Right ventricle myocardium inferior (tissue), 1 donor: ENCODE measurements at regions of chr17 and their contacts with region 1.

Region 1: GRCh38 chr17:43338886-43339516 is 59.8 kb upstream of the ARL4D start:
- DNase-seq: peak; percentile 81
- ATAC-seq: no peak

Region 2: GRCh38 chr17:43024407-43025289 is 314.4 kb before region 1 on chr17 and contains the start of gene RND2:
- intact Hi-C with region 1: loop called (anchors 10 kb)
- DNase-seq: peak; percentile 90
- ATAC-seq: peak; percentile 73
- total RNA-seq, gene RND2: 1.5 TPM

Region 3: GRCh38 chr17:43104665-43105064 is 234.3 kb before region 1 on chr17:
- intact Hi-C with region 1: no loop called
- DNase-seq: no peak
- ATAC-seq: no peak

Region 4: GRCh38 chr17:43456661-43457361 is 117.8 kb after region 1 on chr17:
- intact Hi-C with region 1: no loop called
- DNase-seq: no peak
- ATAC-seq: peak; percentile 85

Region 5: GRCh38 chr17:43979011-43979410 is 640.0 kb after region 1 on chr17:
- intact Hi-C with region 1: no loop called
- DNase-seq: no peak
- ATAC-seq: no peak